Activated CD8-positive, alpha-beta T cell treated with anti-CD3 and anti-CD28 coated beads, Interleukin-2, amount 10 ng/mL, durations not matched to agents 7 days and 5 days (primary cell): ENCODE measurements at regions of chr6 and their contacts with region 1.

Region 1: DNA sequence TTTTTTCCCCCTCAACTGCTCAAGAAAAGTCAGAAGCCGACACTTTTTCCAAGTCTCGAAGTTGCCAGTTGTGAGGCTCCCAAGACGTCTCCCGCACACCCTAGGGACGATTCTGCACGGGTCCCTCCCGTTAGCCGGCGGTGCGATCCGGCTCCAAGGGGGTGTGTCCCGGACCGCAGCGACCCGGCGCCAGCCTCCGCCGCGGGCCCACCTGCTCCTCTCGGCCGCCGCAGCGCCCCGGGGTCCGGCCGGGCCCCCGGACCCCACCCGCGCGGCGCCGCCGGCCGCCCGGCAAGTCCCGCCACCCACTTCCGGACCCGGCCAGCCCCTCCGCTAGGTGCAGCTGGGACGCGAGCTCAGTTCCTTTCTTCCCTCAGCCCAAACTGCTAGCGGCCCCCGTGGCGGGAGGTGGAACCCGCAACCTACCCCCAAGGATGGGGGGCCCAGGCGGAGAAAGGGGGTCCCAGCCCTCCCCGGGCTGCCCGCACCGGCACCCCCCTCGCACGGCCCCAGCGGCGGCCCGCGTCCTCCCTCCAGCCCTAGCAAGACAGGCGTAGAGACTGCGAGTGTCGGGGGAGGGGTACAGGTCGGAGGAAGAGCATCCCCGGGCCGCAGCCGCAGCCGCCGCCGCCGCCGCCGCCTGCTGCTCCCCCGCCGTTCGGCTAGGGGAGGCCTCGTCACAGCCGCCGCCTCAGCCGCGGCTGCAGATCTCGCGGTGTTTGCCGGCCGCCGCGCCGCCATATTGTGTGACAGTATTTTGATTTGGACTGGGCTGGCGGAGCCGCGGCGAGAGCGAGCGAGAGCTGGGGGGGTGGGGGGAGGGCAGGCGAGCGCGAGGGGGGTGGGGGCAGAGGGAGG is 485 bp upstream of the TAB2 start:
- DNase-seq: peak; percentile 93
- ATAC-seq: peak; percentile 79
- H3K4me3 Mint-ChIP-seq: peak overlapping the region; percentile 83
- H3K27ac Mint-ChIP-seq: peak overlapping the region; percentile 88
- H3K4me1 Mint-ChIP-seq: peaks cover 41% of the 10 kb centered on the region
- H3K27me3 Mint-ChIP-seq: no peaks in the 10 kb centered on the region

Region 2: GRCh38 chr6:149082286-149082707 is 234.7 kb before region 1 on chr6:
- CTCF ChIA-PET with region 1: interaction called, 4 read pairs
- POLR2A ChIA-PET with region 1: interaction called, 19 read pairs
- DNase-seq: peak; percentile 95
- ATAC-seq: peak; percentile 90
- H3K4me3 Mint-ChIP-seq: peak overlapping the region; percentile 15
- H3K27ac Mint-ChIP-seq: peak overlapping the region; percentile 5
- H3K4me1 Mint-ChIP-seq: peaks cover 73% of the 10 kb centered on the region
- H3K27me3 Mint-ChIP-seq: no peaks in the 10 kb centered on the region

Region 3: DNA sequence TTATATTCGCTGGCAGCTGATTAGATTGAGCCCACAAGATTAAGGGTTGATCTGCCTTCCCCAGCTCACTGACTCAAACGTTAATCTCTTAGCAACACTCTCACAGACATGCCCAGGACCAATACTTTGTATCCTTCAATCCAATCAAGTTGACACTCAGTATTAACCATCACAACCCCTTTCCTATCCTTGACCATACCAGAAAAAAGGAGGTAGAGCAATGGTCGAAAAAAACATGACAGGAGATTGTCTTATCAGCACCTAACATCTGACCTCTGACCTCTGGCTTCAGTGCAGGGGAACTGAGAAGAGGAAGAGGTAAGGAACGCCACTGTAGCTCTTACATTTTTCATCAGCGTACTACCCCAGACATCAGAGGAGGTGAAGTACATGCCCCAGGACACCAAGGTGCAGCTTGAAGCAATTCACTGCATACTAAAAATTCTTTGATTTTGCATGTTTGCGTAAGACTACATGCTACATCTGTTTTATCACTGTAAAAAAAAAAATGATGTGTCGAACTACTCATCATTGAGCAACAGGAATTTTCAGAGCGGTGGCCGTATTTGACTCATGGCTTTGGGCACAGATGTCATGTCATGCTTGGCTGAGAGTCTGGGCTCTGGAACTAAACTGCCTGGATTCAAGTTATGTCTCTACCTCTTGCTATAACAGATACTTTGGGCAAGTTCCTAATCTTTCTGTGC is 187.5 kb before region 1 on chr6:
- CTCF ChIA-PET with region 1: no interaction called
- POLR2A ChIA-PET with region 1: interaction called, 28 read pairs
- DNase-seq: peak; percentile 20
- ATAC-seq: no peak
- H3K4me3 Mint-ChIP-seq: no peak overlapping the region
- H3K27ac Mint-ChIP-seq: peak overlapping the region; percentile 83
- H3K4me1 Mint-ChIP-seq: peaks cover 61% of the 10 kb centered on the region
- H3K27me3 Mint-ChIP-seq: no peaks in the 10 kb centered on the region

Region 4: GRCh38 chr6:149153100-149153499 is 163.9 kb before region 1 on chr6:
- CTCF ChIA-PET with region 1: interaction called, 3 read pairs
- POLR2A ChIA-PET with region 1: interaction called, 15 read pairs
- DNase-seq: no peak
- ATAC-seq: no peak
- H3K4me3 Mint-ChIP-seq: peak overlapping the region; percentile 26
- H3K27ac Mint-ChIP-seq: peak overlapping the region; percentile 81
- H3K4me1 Mint-ChIP-seq: peaks cover 73% of the 10 kb centered on the region
- H3K27me3 Mint-ChIP-seq: no peaks in the 10 kb centered on the region

Region 5: GRCh38 chr6:149278997-149279396 is 38.0 kb before region 1 on chr6:
- CTCF ChIA-PET with region 1: interaction called, 3 read pairs
- POLR2A ChIA-PET with region 1: interaction called, 11 read pairs
- DNase-seq: no peak
- ATAC-seq: no peak
- H3K4me3 Mint-ChIP-seq: no peak overlapping the region
- H3K27ac Mint-ChIP-seq: no peak overlapping the region
- H3K4me1 Mint-ChIP-seq: peaks cover 36% of the 10 kb centered on the region
- H3K27me3 Mint-ChIP-seq: no peaks in the 10 kb centered on the region